ENCODE measurements at regions of chr12 and their contacts with region 1.

Region 1: DNA sequence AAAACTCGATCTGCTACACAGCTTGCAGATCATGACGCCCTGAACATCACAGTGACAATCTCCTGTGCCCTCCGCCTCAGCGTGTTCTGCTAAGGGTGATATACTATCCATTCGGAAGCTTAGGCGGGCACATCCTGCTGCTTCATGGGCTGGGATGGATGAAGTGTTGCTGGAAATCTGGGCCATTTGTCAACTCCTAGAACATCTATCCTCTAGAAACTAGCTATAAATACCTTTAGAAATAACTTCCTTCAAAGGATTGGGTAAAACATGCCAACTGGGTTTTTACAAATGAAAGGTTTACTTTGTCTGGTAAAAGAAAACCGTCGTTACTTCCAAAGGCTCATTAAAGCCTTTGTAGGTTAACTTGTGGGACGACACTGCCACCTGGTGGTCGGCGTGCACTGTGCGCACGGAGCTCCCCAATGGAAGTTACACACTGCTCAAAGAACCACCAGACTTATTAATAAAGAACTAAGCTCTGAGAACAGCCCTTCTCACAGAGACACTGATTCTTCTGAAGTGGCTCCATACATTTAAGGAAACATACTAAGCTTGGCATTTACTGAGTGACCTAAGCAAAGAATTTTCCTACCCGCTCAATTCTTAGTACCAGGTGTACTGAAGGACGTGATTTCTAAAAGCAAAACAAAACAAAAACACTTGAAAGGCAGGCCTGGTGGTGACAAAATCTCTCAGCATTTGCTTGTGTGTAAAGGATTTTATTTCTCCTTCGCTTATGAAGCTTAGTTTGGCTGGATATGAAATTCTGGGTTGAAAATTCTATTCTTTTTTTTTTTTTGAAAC is 21.6 kb upstream of the CACNA2D4 start:
- DNase-seq: peak; percentile 89
- ATAC-seq: peak; percentile 91
- H3K4me3 Mint-ChIP-seq: no peak overlapping the region; the same call in 1 of the 2 replicates
- H3K27ac Mint-ChIP-seq: no peak overlapping the region
- H3K4me1 Mint-ChIP-seq: peaks cover 4% of the 10 kb centered on the region
- H3K27me3 Mint-ChIP-seq: no peaks in the 10 kb centered on the region
- CTCF ChIP-seq: peak; percentile 93

Region 2: DNA sequence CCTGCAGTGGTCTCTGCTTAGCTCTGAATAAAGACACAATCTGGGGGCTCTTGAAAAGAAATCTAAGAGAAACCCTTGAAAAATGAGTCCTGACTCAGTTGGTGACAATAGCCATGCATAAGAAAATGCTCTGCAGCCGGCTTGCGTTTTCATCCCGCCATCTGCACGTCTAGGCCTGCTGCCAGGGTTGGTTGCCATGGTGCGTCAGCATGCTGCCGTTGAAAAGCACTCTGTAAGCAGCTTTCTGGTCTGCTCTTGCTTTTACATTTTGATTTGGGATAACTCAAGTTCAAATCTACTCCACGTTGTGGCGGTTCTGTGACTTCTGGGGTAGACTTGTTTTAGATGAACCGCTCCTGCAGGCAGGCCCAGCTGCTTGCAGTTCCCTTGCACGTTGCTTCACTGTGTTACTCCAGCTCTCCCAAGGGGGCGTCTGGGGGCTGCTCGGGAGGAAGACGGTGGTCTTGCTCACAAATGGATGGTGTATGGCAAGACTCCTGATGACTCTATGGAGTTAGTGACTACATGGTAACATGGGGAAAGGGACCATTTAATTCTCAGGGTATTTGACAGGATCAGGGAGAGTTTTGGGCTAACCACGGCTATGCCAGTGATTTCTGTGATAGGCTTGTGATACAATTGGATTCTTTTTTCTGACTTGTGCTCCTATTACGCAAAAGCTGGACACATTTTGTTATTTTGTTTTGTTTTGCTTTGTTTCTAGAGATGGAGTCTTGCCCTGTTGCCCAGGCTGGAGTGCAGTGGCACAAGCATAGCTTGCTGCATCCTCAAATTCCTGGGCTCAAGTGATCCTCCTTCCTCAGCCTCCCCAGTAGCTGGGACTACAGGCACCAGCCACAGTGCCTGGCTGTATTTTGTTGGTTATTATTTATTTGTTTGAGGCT is 295.2 kb before region 1 on chr12:
- CTCF ChIA-PET with region 1: interaction called, 14 read pairs
- POLR2A ChIA-PET with region 1: no interaction called
- DNase-seq: no peak
- ATAC-seq: peak; percentile 30; the same call in 1 of the 2 replicates
- H3K4me3 Mint-ChIP-seq: no peak overlapping the region
- H3K27ac Mint-ChIP-seq: no peak overlapping the region
- H3K4me1 Mint-ChIP-seq: 0 out of 2 replicates have a peak, but pooled peaks cover under 1% of the 10 kb centered on the region
- H3K27me3 Mint-ChIP-seq: no peaks in the 10 kb centered on the region
- CTCF ChIP-seq: no peak

Region 3: GRCh38 chr12:1661553-1662335 is 278.3 kb before region 1 on chr12:
- CTCF ChIA-PET with region 1: interaction called, 13 read pairs
- POLR2A ChIA-PET with region 1: no interaction called
- DNase-seq: peak; percentile 71
- ATAC-seq: peak; percentile 35
- H3K4me3 Mint-ChIP-seq: peak overlapping the region; percentile 73
- H3K27ac Mint-ChIP-seq: no peak overlapping the region
- H3K4me1 Mint-ChIP-seq: peaks cover 15% of the 10 kb centered on the region
- H3K27me3 Mint-ChIP-seq: peaks cover 49% of the 10 kb centered on the region
- CTCF ChIP-seq: no peak

Region 4: DNA sequence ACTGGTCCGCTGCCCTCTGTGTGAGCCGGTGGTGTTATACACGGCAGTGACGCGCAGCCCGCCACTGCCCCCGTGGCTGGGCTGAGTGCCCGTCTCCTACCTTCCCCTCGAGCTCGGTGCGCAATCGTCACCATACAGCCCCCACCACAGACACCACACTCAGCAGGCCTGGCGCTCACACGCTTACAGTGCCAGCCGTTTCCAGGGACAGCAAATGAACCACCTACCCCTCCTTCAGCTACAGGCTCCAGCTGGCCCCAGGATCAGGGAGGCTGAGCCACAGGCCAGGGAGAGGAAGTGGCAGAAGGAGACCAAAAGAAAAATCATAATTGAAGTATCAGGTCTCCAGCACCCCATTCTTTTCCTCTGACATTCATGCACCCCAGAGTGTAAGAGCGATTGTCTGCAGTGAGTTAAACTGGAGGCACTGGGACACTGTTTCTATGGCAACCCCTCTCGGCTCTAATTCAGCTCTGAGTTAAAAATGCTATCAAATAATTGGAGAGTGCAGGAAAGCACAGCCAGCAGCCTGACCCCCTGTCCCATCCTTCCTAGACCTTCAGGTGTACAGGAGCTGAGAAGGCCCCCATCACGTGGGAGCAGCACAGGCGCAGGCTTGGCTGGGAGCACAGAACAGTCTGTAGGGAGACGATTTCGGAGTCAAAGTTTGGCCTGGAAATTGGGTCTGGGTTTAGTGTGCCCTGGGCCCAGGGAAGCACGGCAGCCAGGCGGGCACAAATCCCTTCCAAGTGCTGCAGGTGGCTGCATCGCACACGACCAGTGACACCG is 101.6 kb before region 1 on chr12:
- CTCF ChIA-PET with region 1: interaction called, 13 read pairs
- POLR2A ChIA-PET with region 1: no interaction called
- DNase-seq: no peak
- ATAC-seq: no peak
- H3K4me3 Mint-ChIP-seq: no peak overlapping the region
- H3K27ac Mint-ChIP-seq: no peak overlapping the region
- H3K4me1 Mint-ChIP-seq: peaks cover 27% of the 10 kb centered on the region
- H3K27me3 Mint-ChIP-seq: no peaks in the 10 kb centered on the region
- CTCF ChIP-seq: no peak

Region 5: GRCh38 chr12:1851151-1851701 is 88.8 kb before region 1 on chr12:
- CTCF ChIA-PET with region 1: no interaction called
- POLR2A ChIA-PET with region 1: no interaction called
- DNase-seq: no peak
- ATAC-seq: no peak
- H3K4me3 Mint-ChIP-seq: no peak overlapping the region
- H3K27ac Mint-ChIP-seq: no peak overlapping the region
- H3K4me1 Mint-ChIP-seq: peaks cover 9% of the 10 kb centered on the region
- H3K27me3 Mint-ChIP-seq: peaks cover 5% of the 10 kb centered on the region
- CTCF ChIP-seq: no peak

Region 6: GRCh38 chr12:1917172-1918065 is 22.6 kb before region 1 on chr12:
- CTCF ChIA-PET with region 1: interaction called, 18 read pairs
- POLR2A ChIA-PET with region 1: no interaction called
- DNase-seq: no peak
- ATAC-seq: no peak
- H3K4me3 Mint-ChIP-seq: no peak overlapping the region
- H3K27ac Mint-ChIP-seq: no peak overlapping the region
- H3K4me1 Mint-ChIP-seq: peaks cover 19% of the 10 kb centered on the region
- H3K27me3 Mint-ChIP-seq: no peaks in the 10 kb centered on the region
- CTCF ChIP-seq: no peak

Measured in WTC11 (cell line).